Left cardiac atrium (tissue), 4 donors: ENCODE measurements at regions of chr11 and their contacts with region 1.

Region 1: GRCh38 chr11:65540297-65541092 is 15.6 kb downstream of the SCYL1 start:
- DNase-seq: peak; percentile 92
- ATAC-seq: peak; percentile 92 to 93

Region 2: DNA sequence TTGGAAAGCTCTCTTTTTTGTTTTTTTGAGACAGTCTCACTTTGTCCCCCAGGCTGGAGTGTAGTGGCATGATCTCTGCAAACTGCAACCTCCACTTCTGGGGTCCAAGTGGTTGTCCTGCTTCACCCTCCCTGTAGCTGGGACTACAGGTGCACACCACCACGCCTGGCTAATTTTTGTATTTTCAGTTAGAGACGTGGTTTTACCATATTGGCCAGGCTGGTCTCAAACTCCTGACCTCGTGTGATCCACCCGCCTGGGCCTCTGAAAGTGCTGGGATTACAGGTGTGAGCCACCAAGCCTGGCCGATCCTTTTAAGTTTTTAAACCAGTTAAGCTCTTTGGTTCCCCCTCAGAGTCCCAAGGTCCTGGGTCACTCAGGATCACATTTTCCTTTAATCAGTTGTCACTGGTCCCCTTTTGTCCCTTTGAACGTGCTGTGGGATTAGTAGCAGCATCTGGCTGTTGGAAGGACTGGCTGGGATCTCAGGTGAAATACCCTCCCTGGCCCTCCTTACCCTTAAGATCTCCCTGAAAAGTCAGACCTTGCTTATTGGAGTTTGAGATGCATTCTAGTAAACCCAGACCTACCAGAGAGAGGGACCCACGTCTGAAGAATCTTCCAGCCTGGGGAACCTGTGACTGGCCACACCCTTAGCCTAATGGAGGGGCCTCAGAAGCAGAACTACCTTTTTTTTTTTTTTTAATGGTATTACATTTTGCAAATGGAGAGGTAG is 33.6 kb before region 1 on chr11:
- intact Hi-C with region 1: no loop called
- DNase-seq: peak; percentile 39
- ATAC-seq: peak; percentile 19 to 42

Region 3: GRCh38 chr11:65588199-65589054 is 47.9 kb after region 1 on chr11:
- intact Hi-C with region 1: loop called (anchors 2 to 10 kb)
- DNase-seq: no peak
- ATAC-seq: peak; percentile 44 to 45

Region 4: DNA sequence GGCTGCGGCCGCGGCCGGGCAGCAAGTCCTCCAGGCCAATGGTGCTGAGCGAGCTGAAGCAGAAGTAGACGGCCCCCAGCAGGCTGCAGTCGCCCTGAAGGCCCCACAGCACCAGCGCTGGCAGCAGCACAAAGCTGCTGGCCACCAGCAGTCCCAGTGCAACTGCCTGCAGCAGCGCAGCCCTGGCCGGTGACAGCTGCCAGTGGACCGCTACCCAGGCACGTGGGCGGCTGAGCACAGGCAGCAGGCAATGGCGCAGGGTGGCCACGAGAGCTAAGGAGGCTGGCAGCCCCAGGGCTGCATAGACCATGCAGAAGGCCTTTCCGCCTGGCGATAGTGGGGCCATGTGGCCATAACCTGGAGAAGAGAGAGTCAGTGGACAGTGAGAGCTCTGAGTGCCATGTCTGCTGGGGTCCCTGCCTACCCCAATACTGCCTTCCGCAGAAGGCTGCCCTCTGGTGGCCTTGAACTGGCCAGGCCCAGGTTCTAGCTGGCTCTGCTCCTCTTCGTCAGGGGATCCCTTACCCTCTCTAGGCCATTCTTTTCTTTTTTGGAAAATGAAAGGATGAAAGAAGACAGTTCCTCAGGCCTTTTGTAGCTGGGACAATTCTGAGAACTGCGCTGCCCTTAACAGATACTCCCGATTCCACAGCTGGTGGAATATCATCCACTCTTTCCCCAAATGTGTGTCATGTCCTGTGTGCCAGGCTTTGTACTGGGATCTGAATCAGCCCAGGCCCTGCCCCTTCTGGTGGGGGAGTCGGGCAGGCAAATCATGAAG is 53.2 kb after region 1 on chr11:
- intact Hi-C with region 1: loop called (anchors 2 to 10 kb)
- DNase-seq: no peak
- ATAC-seq: peak; percentile 19 to 53